PC-9 (cell line): ENCODE measurements at regions of chr15 and their contacts with region 1.

Region 1: DNA sequence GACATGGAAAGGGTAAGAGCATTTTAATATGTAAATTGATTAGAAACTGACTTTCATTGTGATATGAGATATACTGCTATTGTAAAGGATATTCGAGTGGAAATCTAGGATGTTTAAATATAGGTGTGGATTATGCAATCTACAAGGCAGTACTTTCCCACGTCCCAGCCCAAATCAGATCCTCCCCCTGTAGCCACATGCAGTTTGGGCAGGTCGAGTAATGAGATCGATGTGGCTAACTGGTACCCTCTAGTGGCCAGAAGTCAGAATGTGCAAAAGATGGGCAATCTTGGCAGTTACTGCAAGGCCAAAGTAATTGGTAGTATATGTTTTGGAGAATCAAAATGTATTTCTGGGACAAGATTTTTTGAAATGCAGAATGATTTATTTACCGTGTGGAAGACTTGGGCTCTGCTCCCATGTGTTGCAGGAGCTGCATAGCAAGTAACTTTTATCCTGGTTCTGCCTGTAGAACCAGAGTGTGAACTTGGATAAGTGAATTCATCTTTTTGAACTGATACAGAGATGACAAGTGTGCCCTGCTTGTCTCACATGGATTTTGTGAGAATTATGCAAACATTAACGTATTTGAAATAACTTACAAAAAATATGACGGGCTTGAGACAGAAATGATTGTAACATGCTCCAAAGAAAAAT is 94.5 kb upstream of the ADAMTSL3 start:
- DNase-seq: peak; percentile 47 to 49
- H3K4me3 ChIP-seq: no peak overlapping the region
- H3K27ac ChIP-seq: no peak overlapping the region
- H3K4me1 ChIP-seq: no peaks in the 10 kb centered on the region
- H3K27me3 ChIP-seq: no peaks in the 10 kb centered on the region
- CTCF ChIP-seq: peak; percentile 88

Region 2: GRCh38 chr15:83011271-83012075 is 548.0 kb before region 1 on chr15 and contains the start of gene C15orf40:
- CTCF ChIA-PET with region 1: no interaction called
- POLR2A ChIA-PET with region 1: no interaction called
- intact Hi-C with region 1: loop called (anchors 1 kb)
- DNase-seq: peak; percentile 79 to 89
- H3K4me3 ChIP-seq: peak within 1 kb of the TSS; percentile 92
- H3K27ac ChIP-seq: peak within 1 kb of the TSS; percentile 43
- H3K4me1 ChIP-seq: peaks cover 15% of the 10 kb centered on the region
- H3K27me3 ChIP-seq: no peaks in the 10 kb centered on the region
- CTCF ChIP-seq: 0 out of 2 replicates have a peak, but pooled peaks have one; percentile 33
- total RNA-seq, gene C15orf40: 21.2 and 27.8 TPM in 2 replicates

Region 3: GRCh38 chr15:83066734-83067637 is 492.5 kb before region 1 on chr15 and contains the start of gene BTBD1:
- CTCF ChIA-PET with region 1: no interaction called
- POLR2A ChIA-PET with region 1: no interaction called
- intact Hi-C with region 1: loop called (anchors 5 kb)
- DNase-seq: peak; percentile 86 to 93
- H3K4me3 ChIP-seq: peak within 1 kb of the TSS; percentile 95
- H3K27ac ChIP-seq: peak within 1 kb of the TSS; percentile 72
- H3K4me1 ChIP-seq: peaks cover 27% of the 10 kb centered on the region
- H3K27me3 ChIP-seq: no peaks in the 10 kb centered on the region
- CTCF ChIP-seq: no peak; the same call in 1 of the 2 replicates
- total RNA-seq, gene BTBD1: 24.7 and 28.2 TPM in 2 replicates

Region 4: DNA sequence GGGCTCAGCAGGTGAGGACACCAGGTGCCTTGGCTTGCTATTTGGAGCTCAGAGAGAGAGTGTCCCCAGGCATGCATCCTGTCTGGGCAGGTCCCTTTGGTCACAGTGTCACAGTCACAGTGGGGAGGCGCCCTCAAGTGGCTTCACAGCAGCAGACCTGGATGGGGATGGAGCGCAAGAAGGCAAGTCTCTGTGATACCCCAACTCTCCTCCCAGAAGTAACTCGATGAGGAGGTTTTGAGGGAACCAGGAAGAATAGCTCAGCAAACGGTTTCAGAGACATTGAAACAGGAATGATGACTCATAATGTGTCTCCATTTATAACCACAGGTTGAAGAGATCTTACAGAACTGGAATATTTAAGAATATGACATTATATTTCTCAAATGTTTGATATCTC is 178.8 kb before region 1 on chr15:
- CTCF ChIA-PET with region 1: no interaction called
- POLR2A ChIA-PET with region 1: no interaction called
- intact Hi-C with region 1: loop called (anchors 5 kb)
- DNase-seq: peak; percentile 82 to 88
- H3K4me3 ChIP-seq: no peak overlapping the region
- H3K27ac ChIP-seq: peak overlapping the region; percentile 95
- H3K4me1 ChIP-seq: peaks cover 53% of the 10 kb centered on the region
- H3K27me3 ChIP-seq: no peaks in the 10 kb centered on the region
- CTCF ChIP-seq: peak; percentile 73

Region 5: GRCh38 chr15:83516935-83517334 is 42.5 kb before region 1 on chr15:
- CTCF ChIA-PET with region 1: no interaction called
- POLR2A ChIA-PET with region 1: no interaction called
- intact Hi-C with region 1: no loop called
- DNase-seq: no peak
- H3K4me3 ChIP-seq: no peak overlapping the region
- H3K27ac ChIP-seq: no peak overlapping the region
- H3K4me1 ChIP-seq: no peaks in the 10 kb centered on the region
- H3K27me3 ChIP-seq: 0 out of 2 replicates have a peak, but pooled peaks cover 9% of the 10 kb centered on the region
- CTCF ChIP-seq: no peak

Region 6: DNA sequence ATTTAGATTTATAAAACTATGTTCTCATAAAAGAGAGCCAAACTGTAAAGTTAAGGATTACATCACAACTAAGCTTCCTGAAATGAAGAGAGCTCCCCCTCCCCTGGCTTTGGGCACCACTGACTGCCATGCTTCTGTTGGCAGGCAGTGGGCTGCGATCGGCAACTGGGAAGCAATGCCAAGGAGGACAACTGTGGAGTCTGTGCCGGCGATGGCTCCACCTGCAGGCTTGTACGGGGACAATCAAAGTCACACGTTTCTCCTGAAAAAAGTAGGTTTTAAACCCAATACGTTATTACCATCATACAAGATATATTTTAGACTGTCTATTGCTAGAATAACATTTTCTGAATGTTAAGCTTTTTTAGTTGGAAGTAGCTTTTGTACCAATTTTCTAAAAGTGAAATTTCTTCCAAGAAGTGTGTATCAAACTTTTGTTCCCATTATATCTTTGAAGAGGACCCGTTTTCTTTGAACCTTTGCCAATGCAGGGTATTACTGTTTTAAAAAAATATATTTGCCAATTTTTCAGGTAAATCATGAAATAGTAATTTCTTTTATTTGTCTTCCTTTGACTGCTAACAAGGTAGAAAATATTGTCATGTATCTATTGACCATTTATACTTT is 278.6 kb after region 1 on chr15:
- CTCF ChIA-PET with region 1: no interaction called
- POLR2A ChIA-PET with region 1: no interaction called
- intact Hi-C with region 1: no loop called
- DNase-seq: peak in 1 of 2 experiments; percentile 14
- H3K4me3 ChIP-seq: no peak overlapping the region
- H3K27ac ChIP-seq: no peak overlapping the region
- H3K4me1 ChIP-seq: no peaks in the 10 kb centered on the region
- H3K27me3 ChIP-seq: no peaks in the 10 kb centered on the region
- CTCF ChIP-seq: peak; percentile 65